ENCODE measurements at regions of chr21 and their contacts with region 1.

Region 1: GRCh38 chr21:37700641-37701202 is 215.5 kb downstream of the KCNJ6 start:
- DNase-seq: no peak
- ATAC-seq: peak; percentile 84

Region 2: GRCh38 chr21:38126669-38127303 is 426.1 kb after region 1 on chr21:
- intact Hi-C with region 1: loop called in 1 of 2 experiments (anchors 10 kb)
- DNase-seq: peak in 1 of 2 donors; percentile 59
- ATAC-seq: peak; percentile 73

Measured in left colon (tissue), 2 donors.